ENCODE measurements at regions of chr3 and their contacts with region 1.

Region 1: DNA sequence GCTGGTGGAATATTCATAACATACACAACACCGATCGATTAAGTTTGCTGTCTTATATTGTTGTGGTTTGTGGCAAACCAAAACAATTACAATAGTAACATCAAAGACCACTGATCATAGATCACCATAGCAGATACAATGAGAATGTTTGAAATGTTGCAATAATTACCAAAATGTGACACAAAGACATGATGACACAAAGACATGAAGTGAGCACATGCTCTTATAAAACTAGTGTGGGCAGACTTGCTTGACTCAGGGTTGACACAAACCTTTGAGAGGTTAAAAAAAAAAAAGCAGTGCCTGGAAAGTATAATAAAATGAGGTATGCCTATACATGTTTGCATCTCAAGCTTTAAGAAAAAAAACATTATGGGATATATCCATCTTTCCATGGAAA is 130.3 kb downstream of the NR1I2 start:
- DNase-seq: no peak
- H3K4me3 Mint-ChIP-seq: no peak overlapping the region
- H3K27ac Mint-ChIP-seq: peak overlapping the region; percentile 75
- H3K4me1 Mint-ChIP-seq: peaks cover 21% of the 10 kb centered on the region
- H3K27me3 Mint-ChIP-seq: peaks cover 2% of the 10 kb centered on the region

Region 2: DNA sequence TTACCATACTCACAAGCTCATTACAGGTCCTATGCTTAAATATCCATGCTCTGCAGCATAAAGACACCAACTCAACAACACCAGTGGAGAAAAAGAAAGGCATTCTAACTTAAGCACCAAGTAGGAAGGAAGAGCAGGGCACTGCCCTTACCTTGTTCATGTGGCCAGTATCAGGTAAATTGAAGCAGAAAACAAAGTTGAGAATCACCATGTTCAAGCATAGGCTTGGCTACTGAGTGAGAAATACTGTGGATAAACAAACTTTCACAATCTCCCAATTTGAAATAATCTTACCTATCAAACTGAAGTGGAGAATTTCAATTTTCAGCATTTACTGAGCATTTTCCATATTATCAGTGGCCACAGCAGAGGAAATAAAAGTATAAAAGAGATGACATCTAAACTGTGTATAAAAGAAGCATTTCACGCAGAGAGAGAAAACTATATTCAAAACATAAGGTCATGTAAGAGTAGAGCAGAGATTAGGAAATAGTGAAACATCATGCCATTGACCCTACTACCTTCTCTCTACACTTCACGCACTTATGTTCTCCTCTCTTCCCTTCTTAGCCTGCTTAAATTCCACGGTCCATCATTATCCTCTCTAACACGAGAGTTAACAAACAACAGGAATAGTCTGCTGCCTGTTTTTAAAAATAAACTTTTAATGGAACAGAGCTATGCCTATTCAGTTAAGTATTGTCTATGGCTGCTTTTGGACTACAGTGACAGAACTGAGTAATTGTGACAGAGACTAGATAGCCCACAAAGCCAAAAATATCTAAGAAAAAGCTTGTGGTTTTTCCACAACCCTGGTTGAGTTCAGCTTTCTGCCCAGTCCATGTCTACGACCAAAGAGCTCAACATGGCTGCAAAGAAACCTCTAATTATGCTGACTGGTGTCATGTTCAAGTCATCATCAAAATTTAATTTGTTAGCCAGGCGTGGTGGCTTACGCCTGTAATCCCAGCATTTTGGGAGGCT is 12.2 kb after region 1 on chr3:
- intact Hi-C with region 1: no loop called
- DNase-seq: no peak
- H3K4me3 Mint-ChIP-seq: no peak overlapping the region
- H3K27ac Mint-ChIP-seq: no peak overlapping the region
- H3K4me1 Mint-ChIP-seq: peaks cover 4% of the 10 kb centered on the region
- H3K27me3 Mint-ChIP-seq: no peaks in the 10 kb centered on the region

Region 3: GRCh38 chr3:119937229-119937628 is 25.0 kb after region 1 on chr3:
- intact Hi-C with region 1: loop called (anchors 1 kb)
- DNase-seq: peak; percentile 22
- H3K4me3 Mint-ChIP-seq: peak overlapping the region; percentile 22
- H3K27ac Mint-ChIP-seq: peak overlapping the region; percentile 34
- H3K4me1 Mint-ChIP-seq: peaks cover 29% of the 10 kb centered on the region
- H3K27me3 Mint-ChIP-seq: no peaks in the 10 kb centered on the region

Region 4: DNA sequence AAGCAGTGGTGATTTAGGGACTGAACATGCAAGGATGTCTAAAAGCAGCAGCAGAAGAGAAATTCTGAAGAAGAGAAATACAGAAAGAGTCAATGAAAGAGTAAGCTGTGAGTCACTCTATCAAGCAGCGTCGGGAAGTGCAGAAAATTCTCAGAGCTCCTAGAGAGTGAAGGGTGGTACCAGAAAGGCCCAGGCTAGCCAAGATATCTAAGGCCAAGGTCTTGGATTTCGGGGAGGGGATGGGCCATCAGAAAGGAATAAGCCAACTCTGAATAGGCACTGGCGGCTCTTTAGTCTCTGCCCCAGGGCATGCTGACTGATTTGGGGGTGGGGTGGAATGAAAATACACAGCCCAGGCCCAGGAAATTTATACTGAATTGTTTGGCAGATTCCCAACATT is 301.9 kb after region 1 on chr3:
- intact Hi-C with region 1: no loop called
- DNase-seq: no peak
- H3K4me3 Mint-ChIP-seq: no peak overlapping the region
- H3K27ac Mint-ChIP-seq: no peak overlapping the region
- H3K4me1 Mint-ChIP-seq: no peaks in the 10 kb centered on the region
- H3K27me3 Mint-ChIP-seq: peaks cover 19% of the 10 kb centered on the region